ENCODE measurements at regions of chr19 and their contacts with region 1.

Region 1: GRCh38 chr19:13155472-13156359 is 5.5 kb downstream of the IER2 start:
- DNase-seq: peak; percentile 94
- ATAC-seq: peak; percentile 46
- H3K4me3 Mint-ChIP-seq: peak overlapping the region; percentile 99
- H3K27ac Mint-ChIP-seq: peak overlapping the region; percentile 97
- H3K4me1 Mint-ChIP-seq: peaks cover 61% of the 10 kb centered on the region
- H3K27me3 Mint-ChIP-seq: no peaks in the 10 kb centered on the region
- CTCF ChIP-seq: no peak

Region 2: GRCh38 chr19:13093407-13094105 is 62.2 kb before region 1 on chr19:
- CTCF ChIA-PET with region 1: interaction called, 4 read pairs
- POLR2A ChIA-PET with region 1: interaction called, 62 read pairs
- intact Hi-C with region 1: loop called (anchors 1 kb)
- DNase-seq: peak; percentile 73
- ATAC-seq: peak; percentile 56
- H3K4me3 Mint-ChIP-seq: peak overlapping the region; percentile 29
- H3K27ac Mint-ChIP-seq: peak overlapping the region; percentile 95
- H3K4me1 Mint-ChIP-seq: peaks cover 36% of the 10 kb centered on the region
- H3K27me3 Mint-ChIP-seq: no peaks in the 10 kb centered on the region
- CTCF ChIP-seq: peak; percentile 71

Region 3: DNA sequence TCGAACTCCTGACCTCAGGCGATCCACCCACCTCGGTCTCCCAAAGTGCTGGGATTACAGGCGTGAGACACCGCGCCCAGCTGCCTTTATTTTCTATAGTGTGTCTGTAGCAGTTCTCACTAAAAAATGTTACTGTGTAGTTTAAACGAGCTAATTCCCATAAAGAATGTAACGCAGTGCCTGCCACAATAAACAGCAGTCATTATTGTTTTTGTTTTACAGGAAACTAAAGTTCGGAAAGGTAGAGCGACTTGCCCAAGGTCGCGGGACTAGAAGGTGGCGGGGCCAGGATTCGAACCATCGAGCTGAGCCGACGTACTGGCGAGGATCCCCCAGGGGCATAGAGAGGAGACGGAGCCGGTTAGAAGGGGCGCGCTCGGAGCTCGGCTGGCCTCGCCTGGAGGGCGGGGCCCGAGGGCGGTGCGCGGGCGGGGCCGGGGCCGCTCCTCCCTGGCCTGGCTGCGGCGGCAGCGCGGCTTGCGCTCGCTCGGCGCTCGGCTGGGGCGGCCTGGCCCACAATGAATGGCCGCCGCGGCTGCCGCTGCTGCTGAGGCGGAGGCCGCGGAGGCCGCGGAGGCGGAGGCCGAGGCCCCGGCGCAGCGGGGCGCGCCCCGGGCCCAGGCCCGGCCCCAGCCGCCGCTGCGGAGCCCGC is 37.8 kb before region 1 on chr19 and contains the start of gene NACC1:
- CTCF ChIA-PET with region 1: interaction called, 8 read pairs
- POLR2A ChIA-PET with region 1: interaction called, 117 read pairs
- intact Hi-C with region 1: loop called (anchors 1 kb)
- DNase-seq: peak; percentile 94
- ATAC-seq: peak; percentile 81
- H3K4me3 Mint-ChIP-seq: peak within 1 kb of the TSS; percentile 99
- H3K27ac Mint-ChIP-seq: peak within 1 kb of the TSS; percentile 96
- H3K4me1 Mint-ChIP-seq: peaks cover 64% of the 10 kb centered on the region
- H3K27me3 Mint-ChIP-seq: no peaks in the 10 kb centered on the region
- CTCF ChIP-seq: no peak
- total RNA-seq, gene NACC1: 62.1 and 68.8 TPM in 2 replicates

Region 4: DNA sequence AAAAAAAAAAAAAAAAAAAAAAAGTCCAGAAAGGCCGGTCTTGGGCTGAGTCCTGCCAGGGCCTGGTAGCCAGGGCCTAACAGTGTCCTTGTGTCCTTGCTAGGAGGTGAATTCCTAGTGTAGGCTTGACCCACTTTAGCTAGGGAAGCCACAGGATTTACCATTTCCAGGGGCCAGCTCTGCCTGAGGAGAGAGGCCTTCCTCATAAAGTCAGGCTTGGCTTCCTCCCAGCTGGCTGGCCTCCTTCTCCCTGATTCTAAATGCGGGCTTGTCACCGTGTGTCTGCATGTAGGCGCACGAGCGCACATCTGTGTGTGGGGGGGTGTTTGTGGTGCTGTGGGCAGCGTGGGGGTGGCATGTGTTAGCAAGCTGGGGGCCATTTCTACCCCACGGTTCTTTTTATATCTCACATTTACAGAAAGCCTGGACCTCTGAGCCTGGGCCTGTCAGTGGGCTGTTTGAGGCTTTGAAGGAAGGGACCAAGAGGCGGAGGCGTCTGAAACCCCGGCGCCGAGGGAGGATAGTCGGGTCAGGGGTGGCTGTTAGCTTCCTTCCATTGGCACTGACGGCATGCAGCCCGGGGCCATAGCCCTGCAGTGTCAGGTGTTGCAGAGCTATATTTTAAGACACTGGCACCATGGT is 26.2 kb after region 1 on chr19:
- CTCF ChIA-PET with region 1: interaction called, 9 read pairs
- POLR2A ChIA-PET with region 1: interaction called, 49 read pairs
- intact Hi-C with region 1: no loop called
- DNase-seq: no peak
- ATAC-seq: peak; percentile 66
- H3K4me3 Mint-ChIP-seq: peak overlapping the region; percentile 49
- H3K27ac Mint-ChIP-seq: peak overlapping the region; percentile 46
- H3K4me1 Mint-ChIP-seq: peaks cover 33% of the 10 kb centered on the region
- H3K27me3 Mint-ChIP-seq: no peaks in the 10 kb centered on the region
- CTCF ChIP-seq: no peak

Region 5: DNA sequence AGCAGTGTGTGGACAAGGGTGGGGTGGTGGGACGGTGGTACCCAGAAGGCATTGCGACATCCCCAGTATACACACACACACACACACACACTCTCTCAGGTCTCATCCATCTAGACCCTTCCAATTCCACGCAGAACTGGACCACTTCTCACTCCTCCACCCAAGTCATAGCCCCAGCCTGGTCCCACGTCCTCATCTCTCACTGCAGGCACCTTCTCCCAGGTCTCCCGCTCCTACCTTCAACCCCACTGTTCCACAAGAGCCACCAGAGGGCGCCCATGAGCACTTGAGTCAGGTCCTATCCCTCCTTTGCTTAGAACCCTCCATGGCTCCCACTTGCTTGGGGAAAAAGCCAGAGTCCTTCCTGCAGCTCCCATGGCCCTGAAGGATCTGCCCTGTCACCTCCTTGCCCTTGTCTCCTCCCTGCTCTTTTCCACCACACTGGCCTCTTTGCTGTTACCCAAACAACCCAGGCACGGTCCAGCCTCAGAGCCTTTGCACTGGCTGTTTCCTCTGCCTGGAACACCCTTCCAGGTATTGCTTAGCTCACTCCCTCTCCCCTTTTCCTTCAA is 57.1 kb after region 1 on chr19:
- CTCF ChIA-PET with region 1: interaction called, 3 read pairs
- POLR2A ChIA-PET with region 1: interaction called, 28 read pairs
- intact Hi-C with region 1: loop called (anchors 1 kb)
- DNase-seq: peak; percentile 60
- ATAC-seq: no peak
- H3K4me3 Mint-ChIP-seq: no peak overlapping the region
- H3K27ac Mint-ChIP-seq: no peak overlapping the region
- H3K4me1 Mint-ChIP-seq: peaks cover 66% of the 10 kb centered on the region
- H3K27me3 Mint-ChIP-seq: no peaks in the 10 kb centered on the region
- CTCF ChIP-seq: no peak

Region 6: GRCh38 chr19:13318190-13318589 is 162.5 kb after region 1 on chr19:
- CTCF ChIA-PET with region 1: no interaction called
- POLR2A ChIA-PET with region 1: no interaction called
- intact Hi-C with region 1: no loop called
- DNase-seq: no peak
- ATAC-seq: no peak
- H3K4me3 Mint-ChIP-seq: no peak overlapping the region
- H3K27ac Mint-ChIP-seq: no peak overlapping the region
- H3K4me1 Mint-ChIP-seq: no peaks in the 10 kb centered on the region
- H3K27me3 Mint-ChIP-seq: peaks cover 31% of the 10 kb centered on the region
- CTCF ChIP-seq: no peak

Region 7: GRCh38 chr19:13839130-13839937 is 683.6 kb after region 1 on chr19:
- CTCF ChIA-PET with region 1: no interaction called
- POLR2A ChIA-PET with region 1: interaction called, 10 read pairs
- intact Hi-C with region 1: loop called (anchors 1 kb)
- DNase-seq: peak; percentile 70
- ATAC-seq: peak; percentile 45
- H3K4me3 Mint-ChIP-seq: peak overlapping the region; percentile 86
- H3K27ac Mint-ChIP-seq: peak overlapping the region; percentile 92
- H3K4me1 Mint-ChIP-seq: peaks cover 75% of the 10 kb centered on the region
- H3K27me3 Mint-ChIP-seq: no peaks in the 10 kb centered on the region
- CTCF ChIP-seq: no peak

Region 8: DNA sequence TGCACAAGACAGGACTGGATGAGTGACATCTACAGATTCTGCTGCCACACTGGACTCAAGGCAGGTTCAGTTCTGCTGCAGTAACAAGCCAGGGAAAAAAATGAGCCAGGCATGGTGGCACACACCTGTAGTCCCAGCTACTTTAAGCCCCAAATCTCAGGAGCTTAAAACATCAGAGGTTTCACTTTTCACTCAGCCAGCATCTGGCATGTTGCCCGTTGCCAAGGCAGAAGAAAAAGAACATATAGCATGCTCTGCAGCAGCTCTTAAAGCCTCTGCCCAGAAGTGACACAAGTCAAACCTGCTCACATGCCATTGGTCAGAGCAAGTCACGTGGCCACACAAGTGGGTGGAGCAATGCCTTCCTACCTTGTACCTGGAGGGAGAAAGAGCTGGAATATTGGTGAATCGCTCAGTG is 1210.8 kb after region 1 on chr19:
- CTCF ChIA-PET with region 1: no interaction called
- POLR2A ChIA-PET with region 1: no interaction called
- intact Hi-C with region 1: loop called (anchors 5 kb)
- DNase-seq: peak; percentile 63
- ATAC-seq: peak; percentile 38
- H3K4me3 Mint-ChIP-seq: peak overlapping the region; percentile 22
- H3K27ac Mint-ChIP-seq: peak overlapping the region; percentile 93
- H3K4me1 Mint-ChIP-seq: peaks cover 77% of the 10 kb centered on the region
- H3K27me3 Mint-ChIP-seq: no peaks in the 10 kb centered on the region
- CTCF ChIP-seq: no peak